ENCODE measurements at regions of chr21 and their contacts with region 1.

Region 1: DNA sequence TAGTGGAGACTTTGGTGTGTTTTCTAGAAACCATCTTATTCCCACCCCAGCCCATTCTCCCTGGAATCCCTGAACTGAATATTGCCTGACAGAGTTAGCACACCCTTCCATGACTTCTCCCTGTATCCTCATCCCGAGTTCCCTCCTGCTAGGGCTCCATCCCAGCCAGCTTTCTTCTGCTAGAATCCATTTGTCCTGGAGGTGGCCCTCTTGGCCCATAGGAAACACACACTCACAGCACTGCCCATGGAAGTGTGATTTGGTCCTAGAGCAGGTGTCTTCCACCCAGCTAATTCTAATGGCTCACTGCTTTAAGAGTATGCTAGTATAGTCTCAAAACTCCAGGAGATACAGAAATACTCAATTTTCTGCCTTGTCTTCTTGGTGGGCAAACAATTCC is 4.1 kb downstream of the KRTAP15-1 start:
- H3K4me3 ChIP-seq: no peak overlapping the region
- H3K27ac ChIP-seq: no peak overlapping the region
- H3K4me1 ChIP-seq: no peaks in the 10 kb centered on the region
- CTCF ChIP-seq: no peak

Region 2: GRCh38 chr21:30434033-30434631 is 10.1 kb before region 1 on chr21:
- CTCF ChIA-PET with region 1: interaction called, 12 read pairs
- POLR2A ChIA-PET with region 1: no interaction called
- H3K4me3 ChIP-seq: no peak overlapping the region
- H3K27ac ChIP-seq: no peak overlapping the region
- H3K4me1 ChIP-seq: no peaks in the 10 kb centered on the region
- CTCF ChIP-seq: no peak

Region 3: GRCh38 chr21:30478011-30478410 is 33.8 kb after region 1 on chr21:
- CTCF ChIA-PET with region 1: no interaction called
- POLR2A ChIA-PET with region 1: no interaction called
- H3K4me3 ChIP-seq: no peak overlapping the region
- H3K27ac ChIP-seq: no peak overlapping the region
- H3K4me1 ChIP-seq: no peaks in the 10 kb centered on the region
- CTCF ChIP-seq: no peak

Measured in HEK293 (cell line).